Activated CD4-positive, alpha-beta memory T cell treated with anti-CD3 and anti-CD28 coated beads, Interleukin-2, amount 10 ng/mL, durations not matched to agents 7 days and 5 days (primary cell): ENCODE measurements at regions of chr1 and their contacts with region 1.

Region 1: GRCh38 chr1:145927063-145927886 is at the start of gene RBM8A:
- DNase-seq: peak; percentile 97
- H3K4me3 Mint-ChIP-seq: peak within 1 kb of the TSS; percentile 67
- H3K27ac Mint-ChIP-seq: no peak within 1 kb of the TSS
- H3K4me1 Mint-ChIP-seq: peaks cover 21% of the 10 kb centered on the region
- H3K27me3 Mint-ChIP-seq: no peaks in the 10 kb centered on the region
- total RNA-seq, gene RBM8A: 168 to 174 TPM

Region 2: DNA sequence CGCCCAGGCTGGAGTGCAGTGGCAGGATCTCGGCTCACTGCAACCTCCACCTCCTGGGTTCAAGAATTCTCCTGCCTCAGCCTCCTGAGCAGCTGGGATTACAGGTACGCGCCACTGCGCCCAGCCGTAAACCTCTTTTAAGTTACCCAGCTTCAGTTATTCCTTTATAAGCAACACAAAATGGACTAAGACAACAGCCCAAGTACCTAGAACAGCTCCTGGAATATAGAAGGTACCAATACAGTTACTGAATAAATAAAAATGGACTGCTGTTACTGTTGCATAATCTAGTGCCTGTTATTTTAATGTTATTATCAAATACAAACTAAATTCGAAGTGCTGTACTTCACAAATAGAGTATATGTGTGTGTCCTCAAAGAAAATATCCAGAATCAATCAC is 120.4 kb before region 1 on chr1:
- CTCF ChIA-PET with region 1: no interaction called
- POLR2A ChIA-PET with region 1: no interaction called
- DNase-seq: no peak
- H3K4me3 Mint-ChIP-seq: no peak overlapping the region
- H3K27ac Mint-ChIP-seq: no peak overlapping the region
- H3K4me1 Mint-ChIP-seq: peaks cover 5% of the 10 kb centered on the region
- H3K27me3 Mint-ChIP-seq: no peaks in the 10 kb centered on the region

Region 3: GRCh38 chr1:145845514-145846161 is 81.6 kb before region 1 on chr1 and contains the start of gene NUDT17:
- CTCF ChIA-PET with region 1: interaction called, 15 read pairs
- POLR2A ChIA-PET with region 1: interaction called, 14 read pairs
- DNase-seq: peak; percentile 79
- H3K4me3 Mint-ChIP-seq: no peak within 1 kb of the TSS
- H3K27ac Mint-ChIP-seq: peak within 1 kb of the TSS; percentile 45
- H3K4me1 Mint-ChIP-seq: peaks cover 7% of the 10 kb centered on the region
- H3K27me3 Mint-ChIP-seq: no peaks in the 10 kb centered on the region
- total RNA-seq, gene NUDT17: 2.5 to 2.7 TPM

Region 4: GRCh38 chr1:145912128-145912641 is 15.1 kb before region 1 on chr1:
- CTCF ChIA-PET with region 1: interaction called, 10 read pairs
- POLR2A ChIA-PET with region 1: interaction called, 73 read pairs
- DNase-seq: no peak
- H3K4me3 Mint-ChIP-seq: no peak overlapping the region
- H3K27ac Mint-ChIP-seq: no peak overlapping the region
- H3K4me1 Mint-ChIP-seq: peaks cover 23% of the 10 kb centered on the region
- H3K27me3 Mint-ChIP-seq: no peaks in the 10 kb centered on the region

Region 5: GRCh38 chr1:145963995-145964901 is 37.0 kb after region 1 on chr1 and contains the starts of genes ANKRD34A and POLR3GL:
- CTCF ChIA-PET with region 1: interaction called, 34 read pairs
- POLR2A ChIA-PET with region 1: interaction called, 264 read pairs
- DNase-seq: peak; percentile 95
- H3K4me3 Mint-ChIP-seq: peak within 1 kb of the TSS; percentile 96
- H3K27ac Mint-ChIP-seq: peak within 1 kb of the TSS; percentile 79
- H3K4me1 Mint-ChIP-seq: peaks cover 50% of the 10 kb centered on the region
- H3K27me3 Mint-ChIP-seq: peaks cover 5% of the 10 kb centered on the region
- total RNA-seq, gene ANKRD34A: 2.9 to 3.7 TPM
- total RNA-seq, gene POLR3GL: 32.4 to 33.7 TPM

Region 6: GRCh38 chr1:146007506-146008133 is 80.3 kb after region 1 on chr1:
- CTCF ChIA-PET with region 1: interaction called, 5 read pairs
- POLR2A ChIA-PET with region 1: interaction called, 18 read pairs
- DNase-seq: no peak
- H3K4me3 Mint-ChIP-seq: peak overlapping the region; percentile 55
- H3K27ac Mint-ChIP-seq: peak overlapping the region; percentile 87
- H3K4me1 Mint-ChIP-seq: peaks cover 36% of the 10 kb centered on the region
- H3K27me3 Mint-ChIP-seq: no peaks in the 10 kb centered on the region